Activated CD4-positive, alpha-beta memory T cell treated with anti-CD3 and anti-CD28 coated beads for 36 hours (primary cell): ENCODE measurements at regions of chr3 and their contacts with region 1.

Region 1: DNA sequence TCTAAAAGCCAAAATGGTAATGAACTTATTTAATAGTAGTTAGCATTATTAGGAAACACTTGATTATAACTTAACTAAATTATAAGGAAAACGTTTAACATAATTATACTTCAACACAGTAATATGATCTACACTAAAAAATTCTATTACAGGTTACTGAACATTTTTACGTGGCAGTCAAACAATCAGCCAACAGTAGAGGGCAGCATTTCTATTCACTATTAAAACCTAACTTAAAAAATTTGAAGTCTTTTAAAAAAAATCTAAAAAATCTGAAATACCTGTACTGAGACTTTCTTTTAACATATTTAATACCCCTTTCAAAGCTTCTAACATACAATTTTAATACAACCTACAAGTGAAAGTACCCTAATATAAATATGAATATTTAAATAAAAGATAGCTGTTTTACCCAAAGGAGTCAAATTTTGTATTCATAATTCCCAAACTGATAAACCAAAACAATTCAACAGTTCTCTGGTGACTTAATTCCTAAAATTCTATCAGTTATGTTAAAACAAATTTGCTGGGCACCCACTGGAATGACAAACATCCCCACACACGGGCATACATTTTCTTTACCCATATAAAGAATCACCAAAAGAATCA is 41.5 kb downstream of the DLG1 start:
- DNase-seq: peak; percentile 21
- H3K4me3 Mint-ChIP-seq: no peak overlapping the region
- H3K27ac Mint-ChIP-seq: no peak overlapping the region
- H3K4me1 Mint-ChIP-seq: peaks cover 52% of the 10 kb centered on the region
- H3K27me3 Mint-ChIP-seq: no peaks in the 10 kb centered on the region

Region 2: DNA sequence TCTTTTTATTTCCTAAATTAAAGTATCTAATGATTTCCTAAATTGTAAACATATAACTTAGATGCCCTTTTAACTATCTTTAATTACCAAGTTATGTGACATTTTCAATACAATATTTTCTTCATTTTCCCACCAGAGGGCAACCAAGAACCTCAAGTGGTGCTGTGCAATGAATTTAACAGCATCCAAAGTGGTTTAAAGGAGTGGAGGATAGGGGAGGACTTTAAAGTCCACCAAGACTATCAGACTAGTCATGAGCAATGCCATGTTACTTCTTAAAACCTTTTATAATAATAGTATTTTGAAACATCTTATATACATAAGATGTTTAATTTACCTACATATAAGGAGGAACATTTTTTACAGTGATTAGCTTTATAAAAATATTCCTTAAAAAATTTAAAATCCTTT is 32.9 kb before region 1 on chr3:
- CTCF ChIA-PET with region 1: interaction called, 28 read pairs
- POLR2A ChIA-PET with region 1: no interaction called
- intact Hi-C with region 1: no loop called
- DNase-seq: no peak
- H3K4me3 Mint-ChIP-seq: no peak overlapping the region
- H3K27ac Mint-ChIP-seq: no peak overlapping the region
- H3K4me1 Mint-ChIP-seq: peaks cover 30% of the 10 kb centered on the region
- H3K27me3 Mint-ChIP-seq: no peaks in the 10 kb centered on the region

Region 3: GRCh38 chr3:197292083-197292646 is 35.2 kb after region 1 on chr3:
- CTCF ChIA-PET with region 1: interaction called, 13 read pairs
- POLR2A ChIA-PET with region 1: no interaction called
- intact Hi-C with region 1: loop called (anchors 5 kb)
- DNase-seq: peak; percentile 35
- H3K4me3 Mint-ChIP-seq: no peak overlapping the region
- H3K27ac Mint-ChIP-seq: no peak overlapping the region
- H3K4me1 Mint-ChIP-seq: peaks cover 61% of the 10 kb centered on the region
- H3K27me3 Mint-ChIP-seq: no peaks in the 10 kb centered on the region

Region 4: GRCh38 chr3:197364410-197365071 is 107.6 kb after region 1 on chr3:
- CTCF ChIA-PET with region 1: interaction called, 10 read pairs
- POLR2A ChIA-PET with region 1: no interaction called
- intact Hi-C with region 1: no loop called
- DNase-seq: no peak
- H3K4me3 Mint-ChIP-seq: no peak overlapping the region
- H3K27ac Mint-ChIP-seq: no peak overlapping the region
- H3K4me1 Mint-ChIP-seq: no peaks in the 10 kb centered on the region
- H3K27me3 Mint-ChIP-seq: peaks cover 11% of the 10 kb centered on the region

Region 5: DNA sequence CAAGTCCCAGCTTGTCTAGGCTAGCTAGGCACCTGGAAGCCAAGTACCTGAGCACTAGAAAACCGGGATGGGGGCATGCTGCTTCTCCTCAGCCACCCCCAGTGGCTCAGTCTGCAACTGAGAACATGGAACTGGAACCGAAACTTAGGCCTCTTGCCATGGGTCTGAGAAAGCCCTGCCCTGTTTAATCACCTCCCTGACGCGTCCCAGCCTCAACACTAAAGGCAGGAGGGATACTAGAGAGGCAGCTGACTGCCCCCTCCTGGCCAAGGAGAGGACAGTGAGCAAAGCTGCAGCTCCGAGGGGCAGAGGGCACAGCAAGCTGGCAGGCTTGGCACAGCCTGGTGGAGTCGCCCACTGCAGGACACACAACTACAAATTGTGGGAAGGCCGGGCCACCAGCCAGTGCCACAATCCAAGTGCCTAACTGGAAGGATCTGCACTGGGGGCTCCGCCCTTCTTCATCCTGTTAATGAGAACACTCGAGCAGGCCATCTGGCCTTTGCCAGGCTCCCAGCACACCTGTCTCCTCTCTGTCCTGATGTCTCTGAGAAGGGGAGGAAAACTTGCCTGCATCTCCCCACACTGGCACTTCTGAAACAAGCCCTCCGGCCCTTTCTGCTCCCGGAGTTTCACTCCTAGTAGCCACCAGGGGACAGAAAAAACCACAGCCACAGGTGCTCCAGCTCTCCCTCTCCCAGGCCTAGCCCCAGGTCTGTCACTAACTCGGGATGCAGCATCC is 245.1 kb after region 1 on chr3:
- CTCF ChIA-PET with region 1: interaction called, 57 read pairs
- POLR2A ChIA-PET with region 1: no interaction called
- intact Hi-C with region 1: loop called (anchors 1 kb)
- DNase-seq: peak; percentile 71
- H3K4me3 Mint-ChIP-seq: no peak overlapping the region
- H3K27ac Mint-ChIP-seq: no peak overlapping the region
- H3K4me1 Mint-ChIP-seq: no peaks in the 10 kb centered on the region
- H3K27me3 Mint-ChIP-seq: no peaks in the 10 kb centered on the region